Activated naive CD4-positive, alpha-beta T cell treated with anti-CD3 and anti-CD28 coated beads, Interleukin-2, amount 10 ng/mL, durations not matched to agents 7 days and 5 days (primary cell): ENCODE measurements at regions of chr1 and their contacts with region 1.

Region 1: DNA sequence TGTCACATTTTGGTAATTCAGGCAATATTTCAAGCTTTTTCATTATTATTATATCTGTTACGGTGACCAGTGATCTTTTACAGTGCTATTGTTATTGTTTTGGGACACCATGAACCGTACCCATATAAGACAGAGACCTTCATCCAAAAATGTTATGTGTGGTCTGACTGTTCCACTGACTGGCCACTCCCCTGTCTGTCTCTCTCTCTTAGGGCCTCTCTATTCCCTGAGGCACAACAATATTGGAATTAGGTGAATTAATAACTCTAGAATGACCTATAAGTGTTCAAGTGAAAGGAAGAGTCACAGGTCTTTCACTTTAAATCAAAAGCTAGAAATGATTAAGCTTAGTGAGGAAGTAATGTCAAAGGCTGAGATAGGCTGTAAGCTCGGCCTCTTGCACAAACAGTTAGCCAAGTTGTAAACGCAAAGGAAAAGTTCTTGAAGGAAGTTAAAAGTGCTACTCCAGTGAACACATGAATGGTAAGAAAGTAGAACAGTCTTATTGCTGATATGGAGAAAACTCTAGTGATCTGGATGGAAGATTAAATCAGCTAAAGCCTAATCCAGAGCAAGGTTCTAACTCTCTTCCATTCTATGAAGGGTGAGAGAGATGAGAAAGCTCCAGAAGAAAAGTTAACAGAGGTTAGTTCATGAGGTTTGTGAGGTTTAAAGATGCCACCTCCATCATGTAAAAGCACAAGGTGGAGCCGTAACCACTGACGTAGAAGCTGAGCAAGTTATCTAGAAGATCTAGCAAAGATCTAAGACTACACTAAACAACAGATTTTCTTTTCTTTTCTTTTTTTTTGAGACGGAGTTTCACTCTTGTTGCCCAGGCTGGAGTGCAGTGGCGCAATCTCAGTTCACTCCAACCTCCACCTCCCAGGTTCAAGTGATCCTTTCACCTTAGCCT is 19.7 kb upstream of the DIPK1A start:
- DNase-seq: peak; percentile 71
- H3K4me3 Mint-ChIP-seq: peak overlapping the region; percentile 36
- H3K27ac Mint-ChIP-seq: peak overlapping the region; percentile 99
- H3K4me1 Mint-ChIP-seq: peaks cover 72% of the 10 kb centered on the region
- H3K27me3 Mint-ChIP-seq: no peaks in the 10 kb centered on the region

Region 2: DNA sequence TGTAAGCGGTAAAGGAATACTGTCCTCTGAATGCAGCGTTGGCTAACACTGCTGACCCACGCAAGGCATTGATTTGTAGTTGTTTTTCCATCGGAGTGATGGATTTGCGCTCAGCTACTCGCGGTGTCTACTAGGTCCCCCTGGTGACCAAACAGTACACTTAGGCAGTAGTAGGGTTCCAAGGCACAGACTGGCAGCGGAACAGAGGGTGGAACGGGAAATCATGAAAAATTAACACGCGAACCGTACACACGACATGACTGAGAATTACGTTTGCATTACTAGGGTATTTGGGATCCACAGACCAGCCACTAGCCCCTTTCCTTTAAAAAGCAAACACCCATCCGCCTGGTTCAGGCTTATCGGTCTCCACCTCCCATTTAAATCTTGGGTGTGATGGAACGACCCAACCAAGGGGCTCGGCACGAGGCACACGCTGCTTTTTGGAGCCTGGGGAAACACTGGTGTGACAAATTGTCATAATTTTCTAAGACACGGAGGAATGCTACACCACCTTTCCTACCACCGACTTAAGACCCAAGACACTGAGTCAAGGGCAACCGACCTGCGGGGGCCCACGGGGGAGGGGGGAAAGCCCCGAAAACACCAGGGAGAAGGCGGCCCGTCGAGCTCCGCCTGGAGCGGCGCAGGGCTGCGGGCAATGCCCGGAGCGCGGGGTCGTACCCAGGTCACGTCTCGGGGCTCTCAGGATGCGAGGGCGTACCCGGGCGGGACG is 20.4 kb before region 1 on chr1:
- CTCF ChIA-PET with region 1: interaction called, 38 read pairs
- DNase-seq: peak; percentile 77
- H3K4me3 Mint-ChIP-seq: peak overlapping the region; percentile 88
- H3K27ac Mint-ChIP-seq: peak overlapping the region; percentile 98
- H3K4me1 Mint-ChIP-seq: peaks cover 40% of the 10 kb centered on the region
- H3K27me3 Mint-ChIP-seq: no peaks in the 10 kb centered on the region

Region 3: GRCh38 chr1:92968138-92969032 is 12.6 kb before region 1 on chr1:
- CTCF ChIA-PET with region 1: interaction called, 38 read pairs
- DNase-seq: peak; percentile 37
- H3K4me3 Mint-ChIP-seq: no peak overlapping the region
- H3K27ac Mint-ChIP-seq: no peak overlapping the region
- H3K4me1 Mint-ChIP-seq: peaks cover 43% of the 10 kb centered on the region
- H3K27me3 Mint-ChIP-seq: no peaks in the 10 kb centered on the region

Region 4: GRCh38 chr1:93078986-93079654 is 98.1 kb after region 1 on chr1 and contains the start of gene MTF2:
- CTCF ChIA-PET with region 1: no interaction called
- DNase-seq: peak; percentile 95
- H3K4me3 Mint-ChIP-seq: peak within 1 kb of the TSS; percentile 93
- H3K27ac Mint-ChIP-seq: peak within 1 kb of the TSS; percentile 97
- H3K4me1 Mint-ChIP-seq: peaks cover 45% of the 10 kb centered on the region
- H3K27me3 Mint-ChIP-seq: peaks cover 7% of the 10 kb centered on the region